Mammary epithelial cell (primary cell): ENCODE measurements at regions of chr9 and their contacts with region 1.

Region 1: DNA sequence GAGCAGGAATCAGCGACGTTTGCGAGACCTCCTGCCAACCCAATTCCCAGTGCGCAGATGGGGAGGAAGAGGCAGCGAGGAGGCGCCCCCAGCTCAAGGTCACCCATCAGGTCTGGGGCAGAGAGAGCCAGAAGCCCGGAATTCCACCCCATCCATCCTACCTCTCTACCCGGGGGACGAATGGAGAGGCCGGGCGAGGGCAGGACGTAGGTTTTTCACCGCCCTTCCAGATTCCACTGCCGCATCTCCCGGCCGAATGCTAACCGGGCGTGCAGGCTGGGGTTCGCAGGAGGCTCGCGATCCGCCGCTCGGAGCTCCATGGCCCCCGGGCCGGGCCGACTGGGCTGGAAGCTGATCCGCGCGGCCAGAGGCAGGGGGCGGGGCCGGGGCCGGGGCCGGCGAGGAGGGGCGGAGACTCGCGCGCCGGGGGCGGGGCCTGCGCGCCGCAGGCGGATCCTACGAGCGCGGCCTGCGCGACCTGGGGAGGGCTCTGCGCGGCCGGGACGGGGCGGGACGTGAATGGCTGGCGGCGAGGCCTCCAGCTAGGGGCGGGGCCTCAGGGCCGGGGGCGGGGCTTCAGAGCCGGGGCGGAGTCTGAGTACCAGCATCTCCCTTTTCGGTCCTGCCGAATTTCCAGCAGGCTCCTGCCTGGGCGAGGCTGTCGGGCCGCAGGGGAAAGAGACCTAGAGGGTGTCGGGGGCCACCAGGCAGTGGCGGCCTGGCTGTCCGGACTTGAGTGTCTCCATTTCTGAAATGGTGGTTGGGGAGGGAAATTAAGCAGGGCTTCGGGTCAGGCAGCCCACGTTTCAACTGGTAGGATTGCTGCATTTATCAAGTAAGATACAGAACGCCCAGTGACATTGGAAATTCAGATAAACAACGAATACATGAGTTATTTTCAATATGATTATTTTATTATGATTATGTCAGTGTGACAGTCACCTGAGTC is at the start of gene ST6GALNAC4:
- DNase-seq: peak; percentile 76
- H3K4me3 ChIP-seq: peak within 1 kb of the TSS; percentile 35 to 62 (median 58)
- H3K27ac ChIP-seq: peak within 1 kb of the TSS; percentile 16
- H3K4me1 ChIP-seq: peaks cover 38% of the 10 kb centered on the region
- H3K27me3 ChIP-seq: no peaks in the 10 kb centered on the region
- CTCF ChIP-seq: no peak
- total RNA-seq, gene ST6GALNAC4: 14.3 to 19.6 TPM

Region 2: GRCh38 chr9:127503947-127504782 is 412.8 kb before region 1 on chr9:
- CTCF ChIA-PET with region 1: no interaction called
- dilution Hi-C with region 1: no loop called
- in situ Hi-C with region 1: no loop called
- intact Hi-C with region 1: loop called (anchors 10 kb)
- DNase-seq: peak; percentile 59
- H3K4me3 ChIP-seq: no peak overlapping the region
- H3K27ac ChIP-seq: no peak overlapping the region
- H3K4me1 ChIP-seq: peaks cover 9% of the 10 kb centered on the region
- H3K27me3 ChIP-seq: no peaks in the 10 kb centered on the region
- CTCF ChIP-seq: peak; percentile 77 to 86

Region 3: DNA sequence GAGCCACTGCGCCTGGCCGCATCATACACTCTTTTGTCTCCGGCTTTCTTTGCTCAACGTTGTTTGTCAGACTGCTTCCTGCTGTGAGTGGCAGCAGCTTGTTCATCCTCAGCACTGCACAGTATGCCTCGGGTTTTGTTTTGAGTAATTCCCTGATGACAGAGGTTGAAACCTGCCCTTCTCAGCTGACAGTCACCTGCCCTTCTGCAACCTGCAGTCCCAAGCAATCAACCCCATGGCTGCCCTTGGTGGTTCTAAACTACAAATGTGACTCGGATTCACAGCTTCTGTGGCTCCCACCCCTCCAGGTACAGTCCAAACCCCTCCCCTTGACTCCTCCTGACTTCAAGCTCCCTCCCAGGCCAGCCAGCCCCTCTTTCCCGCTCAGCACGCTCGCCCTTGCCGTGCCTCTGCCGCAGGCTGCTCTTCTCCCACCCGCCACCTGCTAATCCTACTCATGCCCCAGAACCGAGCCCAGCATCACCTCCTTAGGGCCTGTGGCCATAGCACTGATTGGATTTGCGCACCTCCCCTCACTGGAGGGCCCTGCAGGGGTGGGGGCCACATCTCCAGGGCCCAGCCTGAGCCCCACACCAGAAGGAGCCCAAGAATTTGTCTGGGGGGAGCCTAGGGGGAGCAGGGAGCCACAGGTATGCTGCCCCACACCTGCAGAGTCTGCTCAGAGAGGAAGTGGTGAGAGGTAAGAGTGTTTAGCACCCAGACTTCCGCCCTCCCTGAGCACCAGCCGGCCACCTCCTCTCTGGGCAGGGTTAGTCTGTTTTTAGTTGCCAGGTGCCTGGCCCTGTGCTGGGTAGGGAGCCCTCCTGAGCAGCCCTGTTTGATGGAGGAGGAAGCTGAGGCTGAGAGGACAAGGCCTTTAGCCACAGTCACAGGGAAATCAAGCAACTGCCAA is 53.7 kb after region 1 on chr9:
- CTCF ChIA-PET with region 1: no interaction called
- dilution Hi-C with region 1: no loop called
- in situ Hi-C with region 1: no loop called
- intact Hi-C with region 1: no loop called
- DNase-seq: peak; percentile 58
- H3K4me3 ChIP-seq: no peak overlapping the region
- H3K27ac ChIP-seq: no peak overlapping the region
- H3K4me1 ChIP-seq: peaks cover 64% of the 10 kb centered on the region
- H3K27me3 ChIP-seq: no peaks in the 10 kb centered on the region
- CTCF ChIP-seq: no peak